ENCODE measurements at regions of chr2 and their contacts with region 1.

Region 1: GRCh38 chr2:186862869-186863709 is 14.1 kb upstream of the ZSWIM2 start:
- DNase-seq: peak; percentile 62
- H3K4me3 ChIP-seq: no peak overlapping the region
- H3K27ac ChIP-seq: no peak overlapping the region
- H3K4me1 ChIP-seq: no peaks in the 10 kb centered on the region
- H3K27me3 ChIP-seq: no peaks in the 10 kb centered on the region
- CTCF ChIP-seq: peak; percentile 79

Region 2: GRCh38 chr2:187138265-187138664 is 275.2 kb after region 1 on chr2:
- CTCF ChIA-PET with region 1: no interaction called
- POLR2A ChIA-PET with region 1: no interaction called
- intact Hi-C with region 1: loop called (anchors 10 kb)
- DNase-seq: peak; percentile 47
- H3K4me3 ChIP-seq: no peak overlapping the region
- H3K27ac ChIP-seq: no peak overlapping the region
- H3K4me1 ChIP-seq: peaks cover 10% of the 10 kb centered on the region
- H3K27me3 ChIP-seq: peaks cover 4% of the 10 kb centered on the region
- CTCF ChIP-seq: peak; percentile 62

Region 3: DNA sequence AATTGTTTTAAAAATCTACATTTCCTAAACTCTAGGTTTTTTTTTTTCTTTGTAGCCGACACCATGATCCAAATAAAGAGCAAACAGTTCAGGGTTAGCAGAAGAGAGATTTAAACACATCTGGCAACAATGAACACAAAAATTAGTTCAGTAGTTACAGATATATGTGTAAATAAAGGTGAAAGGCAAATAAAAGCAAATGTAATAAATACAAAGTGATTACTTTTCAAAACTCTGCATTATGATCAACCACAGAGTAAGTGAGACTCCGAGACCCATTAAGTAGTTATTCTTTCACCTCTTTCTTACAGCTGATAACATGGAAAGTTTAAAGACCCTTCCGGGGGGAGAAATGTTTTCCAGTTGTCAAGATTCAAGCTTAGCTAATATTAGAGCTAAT is 584.2 kb after region 1 on chr2:
- CTCF ChIA-PET with region 1: interaction called, 14 read pairs
- POLR2A ChIA-PET with region 1: interaction called, 7 read pairs
- intact Hi-C with region 1: loop called (anchors 2 kb)
- DNase-seq: no peak
- H3K4me3 ChIP-seq: peak overlapping the region; percentile 18
- H3K27ac ChIP-seq: no peak overlapping the region
- H3K4me1 ChIP-seq: peaks cover 11% of the 10 kb centered on the region
- H3K27me3 ChIP-seq: no peaks in the 10 kb centered on the region
- CTCF ChIP-seq: no peak

Measured in A673 (cell line).